ENCODE measurements at regions of chr10 and their contacts with region 1.

Region 1: DNA sequence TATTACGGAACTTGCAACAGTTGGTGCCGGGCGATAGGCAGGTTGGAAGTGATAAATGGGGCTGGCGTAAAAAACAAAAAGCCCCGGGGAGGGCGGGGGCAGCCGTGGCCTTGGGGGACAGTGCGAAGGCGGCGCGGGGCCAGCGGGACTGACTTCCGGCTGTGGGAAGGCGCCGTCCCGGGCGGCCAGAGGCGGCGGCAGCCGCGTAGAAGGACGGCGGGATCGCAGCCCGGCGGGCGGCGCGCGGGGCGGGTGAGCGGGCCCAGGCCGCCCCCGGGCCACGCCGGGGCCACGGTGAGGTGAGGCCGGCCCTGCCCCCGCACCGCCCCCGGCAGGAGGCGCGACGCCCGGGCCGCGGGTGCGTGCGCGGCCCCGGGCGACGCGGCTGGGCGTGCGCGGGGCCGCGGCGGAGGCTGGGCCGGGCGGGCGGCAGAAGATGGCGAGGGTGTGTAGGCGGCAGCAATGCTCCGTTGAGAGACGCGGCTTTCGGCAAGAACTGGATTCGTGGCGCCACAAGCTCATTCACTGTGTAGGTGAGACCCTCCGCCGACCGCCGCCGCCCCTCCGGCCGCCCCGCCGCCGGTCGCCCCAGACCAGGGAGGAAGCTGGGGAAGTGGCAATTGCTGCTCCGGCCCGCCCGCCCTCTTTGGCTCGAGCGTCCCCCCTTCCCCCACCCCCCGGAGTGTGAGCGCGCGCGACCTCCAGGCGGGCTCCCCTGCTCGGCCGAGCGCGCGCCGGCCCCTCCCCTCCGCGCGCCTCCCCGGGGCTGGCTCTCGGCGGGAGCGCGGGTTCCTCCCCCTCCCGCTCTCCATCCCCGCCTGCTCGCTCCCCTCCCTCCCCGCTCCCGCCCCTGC is at the start of gene LCOR:
- DNase-seq: peak; percentile 86
- H3K4me3 ChIP-seq: peak within 1 kb of the TSS; percentile 78 to 92 (median 79)
- H3K27ac ChIP-seq: peak within 1 kb of the TSS; percentile 75
- H3K4me1 ChIP-seq: peaks cover 8% of the 10 kb centered on the region
- H3K27me3 ChIP-seq: no peaks in the 10 kb centered on the region
- CTCF ChIP-seq: no peak
- total RNA-seq, gene LCOR: 32.3 to 41.3 TPM

Region 2: GRCh38 chr10:96374985-96375830 is 456.9 kb before region 1 on chr10:
- CTCF ChIA-PET with region 1: no interaction called
- dilution Hi-C with region 1: no loop called
- in situ Hi-C with region 1: loop called in 1 of 2 experiments (anchors 25 kb)
- intact Hi-C with region 1: loop called (anchors 1 kb)
- DNase-seq: peak; percentile 87
- H3K4me3 ChIP-seq: peak overlapping the region; percentile 36 to 48 (median 45)
- H3K27ac ChIP-seq: no peak overlapping the region
- H3K4me1 ChIP-seq: peaks cover 3% of the 10 kb centered on the region
- H3K27me3 ChIP-seq: no peaks in the 10 kb centered on the region
- CTCF ChIP-seq: peak; percentile 97 to 99

Region 3: GRCh38 chr10:96491299-96491698 is 340.8 kb before region 1 on chr10:
- CTCF ChIA-PET with region 1: no interaction called
- dilution Hi-C with region 1: no loop called
- in situ Hi-C with region 1: no loop called
- intact Hi-C with region 1: loop called (anchors 1 kb)
- DNase-seq: no peak
- H3K4me3 ChIP-seq: no peak overlapping the region
- H3K27ac ChIP-seq: no peak overlapping the region
- H3K4me1 ChIP-seq: no peaks in the 10 kb centered on the region
- H3K27me3 ChIP-seq: peaks cover 2% of the 10 kb centered on the region
- CTCF ChIP-seq: peak; percentile 41 to 73

Region 4: DNA sequence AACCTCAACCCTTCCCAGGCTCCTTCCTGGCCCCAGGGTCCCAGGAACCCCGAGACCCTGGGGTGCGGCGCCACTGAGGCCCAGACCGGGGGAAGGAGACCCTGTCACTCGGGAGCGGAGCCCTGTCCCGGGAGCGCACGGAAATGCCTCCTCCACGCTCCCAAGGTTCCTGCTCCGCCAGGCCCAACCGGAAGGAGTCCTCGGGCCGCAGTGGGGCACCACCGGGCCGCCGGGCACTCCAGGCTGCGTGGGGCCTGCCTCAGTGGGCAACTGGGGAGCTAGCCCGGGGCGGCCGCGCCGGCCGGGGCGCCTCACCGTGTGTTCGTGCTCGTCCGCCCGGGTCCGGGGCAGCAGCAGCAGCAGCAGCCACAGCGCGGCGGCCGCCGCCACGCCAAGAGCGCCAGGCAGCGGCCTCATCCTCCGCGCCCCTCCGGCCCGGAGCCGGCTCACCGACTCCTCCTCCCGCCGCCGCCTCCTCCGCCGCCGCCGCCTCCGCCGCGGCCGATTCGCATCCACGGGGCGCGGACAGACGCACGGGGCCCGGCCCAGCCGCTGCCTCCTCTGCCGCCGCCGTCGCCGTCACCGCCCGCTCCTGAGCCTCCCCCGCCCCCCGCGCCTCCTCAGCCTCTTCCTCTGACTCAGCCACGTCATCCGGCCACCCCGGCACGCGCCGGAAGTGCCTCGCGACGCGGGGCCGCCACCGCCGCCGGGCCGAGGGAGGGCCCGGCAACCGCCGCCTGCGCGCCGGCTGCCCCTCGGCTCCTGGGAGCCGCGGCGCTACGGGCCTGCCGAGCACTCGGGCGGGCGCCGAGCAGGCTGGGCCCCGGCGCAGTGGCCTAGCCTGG is 245.5 kb before region 1 on chr10 and contains the start of gene TM9SF3:
- CTCF ChIA-PET with region 1: no interaction called
- dilution Hi-C with region 1: no loop called
- in situ Hi-C with region 1: no loop called
- intact Hi-C with region 1: loop called (anchors 5 kb)
- DNase-seq: peak; percentile 85
- H3K4me3 ChIP-seq: peak within 1 kb of the TSS; percentile 63 to 73 (median 70)
- H3K27ac ChIP-seq: peak within 1 kb of the TSS; percentile 91
- H3K4me1 ChIP-seq: peaks cover 27% of the 10 kb centered on the region
- H3K27me3 ChIP-seq: no peaks in the 10 kb centered on the region
- CTCF ChIP-seq: peak in 1 of 2 donors; percentile 20
- total RNA-seq, gene TM9SF3: 114 to 129 TPM

Region 5: DNA sequence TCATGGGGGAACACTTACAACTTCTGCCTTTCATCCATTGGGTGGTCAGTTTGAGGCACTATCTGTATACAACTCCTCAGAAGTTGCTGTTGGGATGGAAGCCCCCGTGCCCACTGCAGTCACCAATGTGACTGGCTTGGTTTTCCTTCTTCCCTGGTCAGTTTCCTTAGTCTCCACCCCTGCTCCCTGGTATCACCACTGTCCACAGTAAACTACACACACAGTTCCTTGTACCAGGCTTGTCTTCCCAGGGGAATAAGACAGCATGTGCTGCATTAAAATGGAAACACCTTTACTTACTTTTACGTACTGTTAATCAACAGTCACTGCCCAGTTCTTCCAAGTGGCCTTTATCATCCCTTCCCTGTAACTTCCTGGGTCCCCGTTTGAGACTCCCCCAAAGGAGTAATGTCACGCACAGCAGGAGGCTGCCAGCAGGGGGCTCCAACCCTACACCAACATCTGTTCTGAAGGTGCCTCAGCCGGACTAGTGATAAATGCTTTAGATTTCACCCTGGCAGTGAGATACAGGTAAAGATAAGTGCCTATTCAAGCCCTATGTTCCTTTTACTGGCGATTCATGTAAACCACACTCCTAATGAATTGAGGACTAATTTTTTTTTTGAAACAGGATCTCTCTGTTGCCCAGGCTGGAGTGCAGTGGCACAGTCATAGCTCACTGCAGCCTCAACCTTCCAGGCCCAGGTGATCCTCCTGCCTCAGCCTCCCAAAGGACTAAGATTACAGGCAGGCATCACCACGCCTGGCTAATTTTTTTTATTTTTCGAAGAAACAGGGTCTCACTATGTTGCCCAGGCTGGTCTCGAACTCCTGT is 66.5 kb before region 1 on chr10:
- CTCF ChIA-PET with region 1: no interaction called
- dilution Hi-C with region 1: no loop called
- in situ Hi-C with region 1: no loop called
- intact Hi-C with region 1: loop called (anchors 1 kb)
- DNase-seq: peak; percentile 47
- H3K4me3 ChIP-seq: no peak overlapping the region
- H3K27ac ChIP-seq: no peak overlapping the region
- H3K4me1 ChIP-seq: no peaks in the 10 kb centered on the region
- H3K27me3 ChIP-seq: no peaks in the 10 kb centered on the region
- CTCF ChIP-seq: peak; percentile 86 to 91

Region 6: DNA sequence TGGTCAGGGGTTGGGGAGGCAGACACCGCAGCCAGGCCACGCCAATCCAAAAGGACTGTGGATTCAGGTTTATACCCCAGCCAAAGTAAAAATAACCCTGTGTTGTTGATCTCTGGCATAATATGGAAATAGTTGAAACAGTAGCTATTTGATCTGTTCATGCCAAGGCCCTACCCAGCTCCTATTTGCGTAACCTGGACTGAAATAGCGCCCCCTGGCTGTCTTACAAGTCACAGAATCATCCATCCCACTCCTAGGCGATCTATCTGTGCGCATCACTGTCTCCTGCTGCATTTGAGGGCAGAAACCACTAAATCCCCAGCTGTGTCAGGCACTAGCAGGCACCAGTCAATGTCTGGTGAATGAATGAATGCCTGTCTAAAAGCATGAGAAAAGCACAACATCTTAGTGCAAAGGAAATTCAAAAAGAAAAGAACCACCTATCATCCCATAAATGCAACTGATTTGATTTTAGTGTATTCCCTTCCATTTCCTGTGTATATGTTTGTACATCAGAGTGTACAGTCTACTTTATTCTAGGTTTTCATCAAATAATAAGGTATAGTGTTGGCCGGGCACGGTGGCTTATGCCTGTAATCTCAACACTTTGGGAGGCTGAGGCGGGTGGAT is 193.6 kb after region 1 on chr10:
- CTCF ChIA-PET with region 1: interaction called, 5 read pairs
- dilution Hi-C with region 1: no loop called
- in situ Hi-C with region 1: no loop called
- intact Hi-C with region 1: loop called (anchors 2 kb)
- DNase-seq: peak; percentile 20
- H3K4me3 ChIP-seq: no peak overlapping the region
- H3K27ac ChIP-seq: no peak overlapping the region
- H3K4me1 ChIP-seq: no peaks in the 10 kb centered on the region
- H3K27me3 ChIP-seq: peaks cover 1% of the 10 kb centered on the region
- CTCF ChIP-seq: peak; percentile 55 to 70

Region 7: DNA sequence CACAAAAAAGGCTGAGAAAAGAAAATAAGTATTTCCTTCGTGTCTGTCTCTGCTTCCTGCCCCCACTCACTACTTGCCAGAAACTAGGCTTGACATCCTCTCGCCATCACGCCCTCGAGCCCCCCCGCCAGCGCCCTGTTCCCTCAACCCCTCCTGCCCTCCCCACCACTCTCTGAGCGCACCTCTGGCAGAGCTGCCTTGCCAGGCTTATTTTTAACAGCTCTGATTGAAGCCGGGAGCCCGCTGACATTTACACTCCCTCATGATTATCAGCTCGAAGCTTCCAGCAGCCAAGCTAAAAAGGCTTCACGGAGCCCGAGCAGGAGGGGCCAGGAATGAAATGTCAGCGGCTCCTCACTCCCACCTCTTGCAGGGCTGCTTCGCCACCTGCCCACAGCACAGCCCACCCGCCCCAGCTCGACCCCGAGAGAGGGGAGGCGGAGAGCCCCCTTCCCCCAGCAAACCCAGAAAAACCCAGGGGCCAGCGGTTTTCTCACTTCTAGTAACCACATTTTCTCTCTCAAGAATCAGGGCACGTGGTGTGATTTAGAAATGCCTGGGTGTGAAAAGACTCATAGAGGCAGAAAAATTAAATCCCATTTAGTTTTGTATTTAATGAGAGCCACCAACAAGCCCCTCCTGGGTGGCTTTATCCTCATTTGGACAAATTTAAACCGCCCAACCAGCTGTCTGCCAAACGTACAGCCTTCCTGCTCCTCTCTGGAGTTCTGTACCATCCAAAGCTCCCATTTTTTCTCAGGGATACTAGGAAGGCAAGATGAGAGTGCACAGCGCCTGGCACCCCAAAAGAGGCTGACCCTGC is 264.4 kb after region 1 on chr10:
- CTCF ChIA-PET with region 1: no interaction called
- dilution Hi-C with region 1: no loop called
- in situ Hi-C with region 1: no loop called
- intact Hi-C with region 1: no loop called
- DNase-seq: no peak
- H3K4me3 ChIP-seq: no peak overlapping the region
- H3K27ac ChIP-seq: no peak overlapping the region
- H3K4me1 ChIP-seq: no peaks in the 10 kb centered on the region
- H3K27me3 ChIP-seq: peaks cover 10% of the 10 kb centered on the region
- CTCF ChIP-seq: no peak

Region 8: DNA sequence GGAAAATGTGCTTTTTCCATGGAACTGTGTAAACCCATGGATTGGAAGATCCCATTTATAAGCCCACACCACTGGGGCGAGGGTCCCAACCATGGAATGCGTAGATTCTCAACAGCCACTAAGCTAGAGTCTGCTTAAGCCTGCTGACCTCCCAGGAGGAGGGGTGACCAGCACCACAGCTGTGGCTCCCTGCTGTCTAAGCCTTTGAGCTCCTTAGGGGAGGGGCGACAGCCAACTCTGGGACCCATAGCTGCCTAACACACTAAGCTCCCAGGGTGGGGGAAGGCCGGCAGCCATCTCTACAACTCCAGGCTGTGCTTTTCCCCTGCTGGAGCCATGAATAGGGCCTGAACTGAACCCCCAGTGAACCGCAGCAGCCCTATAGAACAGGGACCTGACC is 1864.4 kb after region 1 on chr10:
- CTCF ChIA-PET with region 1: no interaction called
- dilution Hi-C with region 1: no loop called
- in situ Hi-C with region 1: no loop called
- intact Hi-C with region 1: no loop called
- DNase-seq: no peak
- H3K4me3 ChIP-seq: no peak overlapping the region
- H3K27ac ChIP-seq: no peak overlapping the region
- H3K4me1 ChIP-seq: no peaks in the 10 kb centered on the region
- H3K27me3 ChIP-seq: no peaks in the 10 kb centered on the region
- CTCF ChIP-seq: no peak